CD8-positive, alpha-beta memory T cell (primary cell): ENCODE measurements at regions of chr6 and their contacts with region 1.

Region 1: GRCh38 chr6:32952817-32953739 is at the start of gene HLA-DMA:
- DNase-seq: peak; percentile 55 to 84 (median 76)
- H3K4me3 ChIP-seq: peak within 1 kb of the TSS; percentile 62
- H3K4me3 Mint-ChIP-seq: peak within 1 kb of the TSS; percentile 79 to 93 (median 85)
- H3K27ac ChIP-seq: no peak within 1 kb of the TSS
- H3K27ac Mint-ChIP-seq: peak within 1 kb of the TSS; percentile 77 to 97 (median 90)
- H3K4me1 ChIP-seq: peaks cover 23% of the 10 kb centered on the region
- H3K4me1 Mint-ChIP-seq: peaks cover 42 to 83% (median 55%) of the 10 kb centered on the region in 3 donors
- H3K27me3 ChIP-seq: no peaks in the 10 kb centered on the region
- H3K27me3 Mint-ChIP-seq: no peaks in the 10 kb centered on the region
- total RNA-seq, gene HLA-DMA: 14.0 to 16.5 TPM

Region 2: GRCh38 chr6:32666420-32667300 is 286.4 kb before region 1 on chr6 and contains the start of gene HLA-DQB1:
- CTCF ChIA-PET with region 1: no interaction called
- POLR2A ChIA-PET with region 1: no interaction called
- DNase-seq: peak in 3 of 5 donors; percentile 17 to 70 (median 61)
- H3K4me3 ChIP-seq: peak within 1 kb of the TSS; percentile 74
- H3K4me3 Mint-ChIP-seq: peak within 1 kb of the TSS; percentile 81 to 96 (median 91)
- H3K27ac ChIP-seq: peak within 1 kb of the TSS; percentile 62
- H3K27ac Mint-ChIP-seq: peak within 1 kb of the TSS; percentile 8 to 99 (median 94)
- H3K4me1 ChIP-seq: peaks cover 21% of the 10 kb centered on the region
- H3K4me1 Mint-ChIP-seq: peaks cover 29 to 65% (median 65%) of the 10 kb centered on the region in 3 donors
- H3K27me3 ChIP-seq: no peaks in the 10 kb centered on the region
- H3K27me3 Mint-ChIP-seq: peaks cover 0 to 2% of the 10 kb centered on the region in 2 donors
- total RNA-seq, gene HLA-DQB1: 16.0 to 22.7 TPM

Region 3: DNA sequence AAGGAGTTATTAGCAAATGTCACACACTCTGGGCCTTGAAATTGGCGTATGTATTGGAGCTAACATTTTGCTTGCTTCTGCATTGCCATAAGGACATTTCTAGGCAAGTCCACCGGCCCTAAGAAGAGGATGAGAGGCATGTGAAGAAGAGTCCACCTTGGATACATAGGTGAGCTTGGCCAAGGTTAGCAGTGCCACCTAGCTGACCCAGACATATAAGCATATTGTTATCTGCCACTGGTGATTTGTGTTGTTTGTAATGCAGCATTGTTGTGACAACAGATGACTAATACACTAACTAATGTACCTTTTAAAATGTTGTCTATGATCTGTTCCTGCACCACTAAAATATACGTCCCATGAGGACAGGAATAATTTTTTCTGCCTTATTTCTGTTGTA is 236.7 kb before region 1 on chr6:
- CTCF ChIA-PET with region 1: no interaction called
- POLR2A ChIA-PET with region 1: no interaction called
- DNase-seq: no peak
- H3K4me3 ChIP-seq: no peak overlapping the region
- H3K4me3 Mint-ChIP-seq: no peak overlapping the region
- H3K27ac ChIP-seq: no peak overlapping the region
- H3K27ac Mint-ChIP-seq: no peak overlapping the region
- H3K4me1 ChIP-seq: no peaks in the 10 kb centered on the region
- H3K4me1 Mint-ChIP-seq: no peaks in the 10 kb centered on the region
- H3K27me3 ChIP-seq: no peaks in the 10 kb centered on the region
- H3K27me3 Mint-ChIP-seq: peaks cover 14 to 42% of the 10 kb centered on the region in 2 donors

Region 4: GRCh38 chr6:32838114-32838958 is 114.7 kb before region 1 on chr6 and contains the start of gene TAP2:
- CTCF ChIA-PET with region 1: interaction called, 20 read pairs
- POLR2A ChIA-PET with region 1: interaction called, 4 read pairs
- DNase-seq: peak; percentile 94 to 98 (median 97)
- H3K4me3 ChIP-seq: peak within 1 kb of the TSS; percentile 75
- H3K4me3 Mint-ChIP-seq: peak within 1 kb of the TSS; percentile 91 to 97 (median 96)
- H3K27ac ChIP-seq: peak within 1 kb of the TSS; percentile 77
- H3K27ac Mint-ChIP-seq: peak within 1 kb of the TSS; percentile 91 to 100 (median 100)
- H3K4me1 ChIP-seq: peaks cover 78% of the 10 kb centered on the region
- H3K4me1 Mint-ChIP-seq: peaks cover 84 to 91% (median 88%) of the 10 kb centered on the region in 3 donors
- H3K27me3 ChIP-seq: no peaks in the 10 kb centered on the region
- H3K27me3 Mint-ChIP-seq: peaks cover 0 to 2% of the 10 kb centered on the region in 2 donors
- total RNA-seq, gene TAP2: 221 to 228 TPM

Region 5: GRCh38 chr6:32853541-32854375 is 99.3 kb before region 1 on chr6 and contains the starts of genes PSMB9 and TAP1:
- CTCF ChIA-PET with region 1: interaction called, 11 read pairs
- POLR2A ChIA-PET with region 1: interaction called, 4 read pairs
- DNase-seq: peak; percentile 93 to 97 (median 94)
- H3K4me3 ChIP-seq: peak within 1 kb of the TSS; percentile 90
- H3K4me3 Mint-ChIP-seq: peak within 1 kb of the TSS; percentile 95 to 100 (median 99)
- H3K27ac ChIP-seq: peak within 1 kb of the TSS; percentile 97
- H3K27ac Mint-ChIP-seq: peak within 1 kb of the TSS; percentile 99 to 100 (median 100)
- H3K4me1 ChIP-seq: peaks cover 68% of the 10 kb centered on the region
- H3K4me1 Mint-ChIP-seq: peaks cover 71 to 79% (median 77%) of the 10 kb centered on the region in 3 donors
- H3K27me3 ChIP-seq: no peaks in the 10 kb centered on the region
- H3K27me3 Mint-ChIP-seq: no peaks in the 10 kb centered on the region
- total RNA-seq, gene PSMB9: 245 to 255 TPM
- total RNA-seq, gene TAP1: 394 to 407 TPM

Region 6: GRCh38 chr6:32885698-32886286 is 67.3 kb before region 1 on chr6:
- CTCF ChIA-PET with region 1: interaction called, 29 read pairs
- POLR2A ChIA-PET with region 1: interaction called, 3 read pairs
- DNase-seq: peak in 2 of 5 donors; percentile 62 to 68
- H3K4me3 ChIP-seq: no peak overlapping the region
- H3K4me3 Mint-ChIP-seq: peak overlapping the region in 1 of 7 donors; percentile 3
- H3K27ac ChIP-seq: no peak overlapping the region
- H3K27ac Mint-ChIP-seq: no peak overlapping the region
- H3K4me1 ChIP-seq: no peaks in the 10 kb centered on the region
- H3K4me1 Mint-ChIP-seq: no peaks in the 10 kb centered on the region
- H3K27me3 ChIP-seq: no peaks in the 10 kb centered on the region
- H3K27me3 Mint-ChIP-seq: no peaks in the 10 kb centered on the region

Region 7: GRCh38 chr6:32933636-32934085 is 19.4 kb before region 1 on chr6:
- CTCF ChIA-PET with region 1: interaction called, 97 read pairs
- POLR2A ChIA-PET with region 1: interaction called, 4 read pairs
- DNase-seq: peak; percentile 60 to 84 (median 68)
- H3K4me3 ChIP-seq: no peak overlapping the region
- H3K4me3 Mint-ChIP-seq: no peak overlapping the region
- H3K27ac ChIP-seq: no peak overlapping the region
- H3K27ac Mint-ChIP-seq: peak overlapping the region in 1 of 8 donors; percentile 24
- H3K4me1 ChIP-seq: no peaks in the 10 kb centered on the region
- H3K4me1 Mint-ChIP-seq: peaks cover 6 to 10% (median 7%) of the 10 kb centered on the region in 3 donors
- H3K27me3 ChIP-seq: no peaks in the 10 kb centered on the region
- H3K27me3 Mint-ChIP-seq: peaks cover 0 to 2% of the 10 kb centered on the region in 2 donors

Region 8: DNA sequence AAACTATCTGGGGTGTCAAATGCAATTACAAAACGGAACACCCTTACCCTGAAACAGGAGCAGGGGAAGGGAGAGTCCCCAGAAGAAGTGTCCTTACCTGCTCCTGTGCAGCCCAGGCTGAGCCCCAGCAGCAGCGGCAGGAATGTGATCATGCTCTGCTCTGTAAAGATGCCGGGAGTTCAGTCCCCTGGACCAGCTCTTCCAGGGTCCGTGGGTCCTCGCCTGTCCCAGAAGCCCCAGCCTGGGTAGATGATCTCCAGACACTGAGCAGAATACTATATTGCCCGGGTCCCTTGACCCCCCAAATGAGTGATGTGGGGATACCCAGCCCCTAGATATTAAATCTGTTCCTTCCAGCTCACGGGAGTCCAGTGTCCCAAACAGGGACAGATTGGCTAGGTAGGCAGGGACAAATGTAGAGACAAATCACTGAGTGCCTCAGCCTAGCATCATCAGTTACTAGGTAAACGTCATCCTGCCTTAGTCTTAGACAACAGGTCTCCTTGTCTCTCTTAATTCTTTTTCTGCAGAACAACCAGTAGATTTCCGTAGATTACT is 12.3 kb before region 1 on chr6 and contains the start of gene HLA-DMB:
- CTCF ChIA-PET with region 1: interaction called, 90 read pairs
- POLR2A ChIA-PET with region 1: interaction called, 19 read pairs
- DNase-seq: peak; percentile 6 to 75 (median 68)
- H3K4me3 ChIP-seq: peak within 1 kb of the TSS; percentile 73
- H3K4me3 Mint-ChIP-seq: peak within 1 kb of the TSS; percentile 88 to 97 (median 95)
- H3K27ac ChIP-seq: peak within 1 kb of the TSS; percentile 73
- H3K27ac Mint-ChIP-seq: peak within 1 kb of the TSS; percentile 94 to 99 (median 98)
- H3K4me1 ChIP-seq: peaks cover 58% of the 10 kb centered on the region
- H3K4me1 Mint-ChIP-seq: peaks cover 56 to 70% (median 64%) of the 10 kb centered on the region in 3 donors
- H3K27me3 ChIP-seq: no peaks in the 10 kb centered on the region
- H3K27me3 Mint-ChIP-seq: peaks cover 0 to 1% of the 10 kb centered on the region in 2 donors
- total RNA-seq, gene HLA-DMB: 4.3 to 5.3 TPM

Region 9: GRCh38 chr6:33008944-33009861 is 56.1 kb after region 1 on chr6 and contains the start of gene HLA-DOA:
- CTCF ChIA-PET with region 1: no interaction called
- POLR2A ChIA-PET with region 1: no interaction called
- DNase-seq: peak; percentile 23 to 76 (median 56)
- H3K4me3 ChIP-seq: peak within 1 kb of the TSS; percentile 60
- H3K4me3 Mint-ChIP-seq: peak within 1 kb of the TSS; percentile 65 to 92 (median 84)
- H3K27ac ChIP-seq: peak within 1 kb of the TSS; percentile 13
- H3K27ac Mint-ChIP-seq: peak within 1 kb of the TSS; percentile 12 to 94 (median 80)
- H3K4me1 ChIP-seq: peaks cover 10% of the 10 kb centered on the region
- H3K4me1 Mint-ChIP-seq: peaks cover 15 to 18% (median 18%) of the 10 kb centered on the region in 3 donors
- H3K27me3 ChIP-seq: no peaks in the 10 kb centered on the region
- H3K27me3 Mint-ChIP-seq: peaks cover 0 to 5% of the 10 kb centered on the region in 2 donors
- total RNA-seq, gene HLA-DOA: 6.7 to 6.9 TPM

Region 10: DNA sequence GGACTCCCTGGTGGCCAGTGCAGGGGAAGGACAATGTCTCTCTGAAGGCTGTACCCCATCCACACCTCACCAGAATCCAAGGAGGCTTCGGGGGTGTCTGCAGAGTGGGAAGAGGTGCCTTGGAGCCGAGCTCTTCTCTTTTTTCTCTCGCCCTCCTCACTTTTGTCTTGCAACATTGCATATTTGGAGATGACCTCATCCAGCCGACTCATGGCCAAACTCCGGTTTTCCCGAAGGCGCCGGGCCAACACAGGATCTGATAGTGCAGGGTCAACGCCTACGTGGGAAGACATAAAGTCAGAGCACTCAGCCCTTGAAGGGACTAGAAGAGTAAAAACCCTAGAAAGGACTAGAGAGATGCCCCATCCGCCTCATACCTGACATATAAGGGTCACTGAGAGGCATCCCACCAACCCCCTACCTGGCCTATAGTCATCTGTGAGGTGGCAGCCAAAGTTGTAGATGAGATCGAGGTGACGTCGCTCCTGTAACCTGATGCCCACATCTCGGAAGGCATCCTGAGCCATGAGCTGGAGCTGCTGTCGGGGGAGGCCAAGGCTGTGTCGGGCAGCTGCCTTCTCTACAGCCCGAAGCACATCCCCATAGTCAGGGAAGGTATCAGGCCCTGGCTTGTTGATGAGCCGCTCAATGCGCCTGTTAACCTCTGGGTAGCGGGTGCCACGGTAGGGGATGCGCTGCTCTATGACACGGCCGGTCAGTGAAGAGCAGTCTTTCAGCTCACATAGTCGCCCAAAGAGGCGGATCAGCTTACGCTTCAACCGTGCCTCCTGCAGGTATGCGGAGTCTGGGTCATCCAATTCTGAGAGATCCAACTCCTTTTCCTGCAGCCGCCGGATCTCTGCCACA is 367.5 kb after region 1 on chr6:
- CTCF ChIA-PET with region 1: no interaction called
- POLR2A ChIA-PET with region 1: no interaction called
- DNase-seq: no peak
- H3K4me3 ChIP-seq: peak overlapping the region; percentile 40
- H3K4me3 Mint-ChIP-seq: peak overlapping the region; percentile 78 to 100 (median 97)
- H3K27ac ChIP-seq: peak overlapping the region; percentile 18
- H3K27ac Mint-ChIP-seq: peak overlapping the region; percentile 34 to 99 (median 80)
- H3K4me1 ChIP-seq: peaks cover 64% of the 10 kb centered on the region
- H3K4me1 Mint-ChIP-seq: peaks cover 68 to 84% (median 71%) of the 10 kb centered on the region in 3 donors
- H3K27me3 ChIP-seq: no peaks in the 10 kb centered on the region
- H3K27me3 Mint-ChIP-seq: peaks cover 0 to 3% of the 10 kb centered on the region in 2 donors